GM12878 (cell line): ENCODE measurements at regions of chr11 and their contacts with region 1.

Region 1: DNA sequence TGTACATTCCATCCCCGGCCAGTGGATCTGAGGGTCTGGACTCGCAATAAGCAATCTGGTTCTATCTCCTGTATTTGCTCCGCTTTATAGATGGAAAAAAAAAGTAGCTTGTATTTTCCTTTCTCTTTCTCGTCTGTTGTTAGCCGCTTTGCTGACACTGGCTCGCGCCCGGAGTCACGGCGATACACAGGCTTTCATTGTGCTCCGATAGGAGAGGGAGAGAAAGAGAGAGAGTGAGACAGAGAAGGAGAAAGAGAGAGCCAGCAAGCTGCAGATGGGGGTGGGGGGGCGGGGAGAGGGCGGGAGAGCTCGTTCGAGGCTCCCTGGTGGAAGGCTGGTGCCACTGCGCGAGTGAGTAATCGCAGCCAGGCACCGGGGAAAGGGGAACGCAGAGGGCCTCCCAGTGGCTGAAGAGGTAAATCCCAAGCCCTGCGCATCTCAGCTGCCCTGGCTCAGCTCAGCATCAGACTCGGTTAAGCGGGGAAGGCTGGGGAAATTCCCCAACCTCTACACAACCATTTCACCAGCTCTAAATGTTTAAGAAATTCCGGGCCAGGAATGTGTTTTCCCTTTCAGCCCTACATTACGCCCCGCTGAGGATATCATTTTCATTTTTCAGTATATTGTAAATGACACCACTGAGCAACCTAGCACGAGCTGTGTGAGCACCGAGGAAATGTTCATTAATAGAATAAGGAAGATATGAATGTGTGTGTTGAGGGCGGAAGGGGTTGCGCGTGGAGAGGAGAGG is at the start of gene MAML2:
- DNase-seq: peak; percentile 91
- ATAC-seq: peak; percentile 81
- H3K4me3 ChIP-seq: peak within 1 kb of the TSS; percentile 100
- H3K27ac ChIP-seq: peak within 1 kb of the TSS; percentile 80
- H3K4me1 ChIP-seq: peaks cover 12% of the 10 kb centered on the region
- H3K27me3 ChIP-seq: no peaks in the 10 kb centered on the region
- CTCF ChIP-seq: peak; percentile 93 to 98 (median 96)
- EP300 ChIP-seq: no peak; a peak in 1 of 4 replicates
- POLR2A ChIP-seq: no peak; the same call in 1 of the 2 replicates
- RAD21 ChIP-seq: peak; percentile 90
- polyA plus RNA-seq, gene MAML2: 2.5 to 2.6 TPM

Region 2: GRCh38 chr11:95849087-95849825 is 493.9 kb before region 1 on chr11:
- CTCF ChIA-PET with region 1: interaction called, 29 read pairs
- POLR2A ChIA-PET with region 1: interaction called, 3 read pairs
- RAD21 ChIA-PET with region 1: interaction called, 25 read pairs
- SMC1A ChIA-PET with region 1: interaction called, 25 read pairs
- in situ Hi-C with region 1: no loop called
- intact Hi-C with region 1: no loop called
- DNase-seq: no peak
- ATAC-seq: peak; percentile 80
- H3K4me3 ChIP-seq: no peak overlapping the region
- H3K27ac ChIP-seq: no peak overlapping the region
- H3K4me1 ChIP-seq: no peaks in the 10 kb centered on the region
- H3K27me3 ChIP-seq: no peaks in the 10 kb centered on the region
- CTCF ChIP-seq: peak; percentile 24 to 51 (median 44); a peak in 4 of 6 replicates
- EP300 ChIP-seq: no peak
- POLR2A ChIP-seq: no peak
- RAD21 ChIP-seq: peak; percentile 60

Region 3: GRCh38 chr11:96062134-96062533 is 281.0 kb before region 1 on chr11:
- CTCF ChIA-PET with region 1: interaction called, 256 read pairs
- POLR2A ChIA-PET with region 1: no interaction called
- RAD21 ChIA-PET with region 1: interaction called, 213 read pairs
- SMC1A ChIA-PET with region 1: interaction called, 184 read pairs
- in situ Hi-C with region 1: loop called (anchors 5 kb)
- intact Hi-C with region 1: no loop called
- DNase-seq: no peak
- ATAC-seq: peak; percentile 88
- H3K4me3 ChIP-seq: no peak overlapping the region
- H3K27ac ChIP-seq: no peak overlapping the region
- H3K4me1 ChIP-seq: no peaks in the 10 kb centered on the region
- H3K27me3 ChIP-seq: no peaks in the 10 kb centered on the region
- CTCF ChIP-seq: no peak
- EP300 ChIP-seq: no peak
- POLR2A ChIP-seq: no peak
- RAD21 ChIP-seq: no peak

Region 4: GRCh38 chr11:96155627-96156378 is 187.3 kb before region 1 on chr11:
- CTCF ChIA-PET with region 1: interaction called, 10 read pairs
- POLR2A ChIA-PET with region 1: no interaction called
- RAD21 ChIA-PET with region 1: interaction called, 4 read pairs
- SMC1A ChIA-PET with region 1: interaction called, 6 read pairs
- in situ Hi-C with region 1: no loop called
- intact Hi-C with region 1: loop called (anchors 1 kb)
- DNase-seq: peak; percentile 76
- ATAC-seq: peak; percentile 89
- H3K4me3 ChIP-seq: 0 out of 2 replicates have a peak overlapping the region, but pooled peaks have one; percentile 2
- H3K27ac ChIP-seq: peak overlapping the region; percentile 87
- H3K4me1 ChIP-seq: peaks cover 37% of the 10 kb centered on the region
- H3K27me3 ChIP-seq: no peaks in the 10 kb centered on the region
- CTCF ChIP-seq: peak in 2 of 3 experiments; percentile 17 to 19; a peak in 3 of 6 replicates
- EP300 ChIP-seq: peak in 1 of 2 experiments; percentile 82; a peak in 3 of 4 replicates
- POLR2A ChIP-seq: no peak
- RAD21 ChIP-seq: peak; percentile 18

Region 5: DNA sequence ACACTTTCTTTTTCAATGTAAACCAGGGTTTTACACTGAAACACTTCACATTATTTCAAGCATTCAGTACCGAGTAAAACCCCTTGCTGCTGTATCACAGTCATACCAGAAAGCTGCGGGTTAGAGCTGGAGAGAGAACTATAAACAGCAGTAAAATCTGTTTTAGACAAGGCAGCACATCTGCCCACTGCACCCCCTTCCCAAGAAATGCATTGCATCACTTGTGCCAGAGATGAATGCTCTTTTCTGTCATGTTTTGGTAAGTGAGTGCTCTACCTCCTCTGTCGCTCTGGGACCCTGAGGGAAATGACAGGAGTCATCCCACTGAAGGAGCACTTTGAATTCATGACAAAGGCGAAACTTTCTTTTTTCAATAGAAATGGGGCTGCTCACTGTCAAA is 107.4 kb before region 1 on chr11:
- CTCF ChIA-PET with region 1: interaction called, 51 read pairs
- POLR2A ChIA-PET with region 1: interaction called, 5 read pairs
- RAD21 ChIA-PET with region 1: interaction called, 37 read pairs
- SMC1A ChIA-PET with region 1: interaction called, 189 read pairs
- in situ Hi-C with region 1: no loop called
- intact Hi-C with region 1: loop called (anchors 5 kb)
- DNase-seq: no peak
- ATAC-seq: peak; percentile 98
- H3K4me3 ChIP-seq: no peak overlapping the region
- H3K27ac ChIP-seq: peak overlapping the region; percentile 53
- H3K4me1 ChIP-seq: peaks cover 7% of the 10 kb centered on the region
- H3K27me3 ChIP-seq: no peaks in the 10 kb centered on the region
- CTCF ChIP-seq: no peak
- EP300 ChIP-seq: no peak; a peak in 1 of 4 replicates
- POLR2A ChIP-seq: no peak
- RAD21 ChIP-seq: 0 out of 2 replicates have a peak, but pooled peaks have one; percentile 9

Region 6: DNA sequence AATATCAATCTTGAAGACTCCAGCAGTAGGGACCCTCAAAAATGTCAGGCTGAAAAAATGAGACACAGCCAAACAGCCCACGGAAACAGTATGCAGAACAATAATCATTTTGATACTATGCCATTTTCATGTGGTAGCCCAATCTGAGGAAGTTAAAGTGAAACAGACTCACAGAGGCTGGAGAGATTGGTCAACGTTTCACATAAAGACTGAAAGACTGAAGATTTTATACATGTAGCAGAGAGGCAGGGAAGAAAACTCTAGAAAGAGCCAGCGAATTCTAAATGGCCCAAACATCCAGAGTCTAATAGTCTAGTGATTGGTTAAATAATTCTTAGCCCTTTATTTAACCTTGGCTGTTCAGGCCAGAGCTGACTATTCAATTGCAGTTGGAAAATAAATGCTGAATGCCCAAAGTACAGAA is 49.5 kb before region 1 on chr11:
- CTCF ChIA-PET with region 1: interaction called, 25 read pairs
- POLR2A ChIA-PET with region 1: interaction called, 6 read pairs
- RAD21 ChIA-PET with region 1: interaction called, 49 read pairs
- SMC1A ChIA-PET with region 1: interaction called, 101 read pairs
- in situ Hi-C with region 1: no loop called
- intact Hi-C with region 1: loop called (anchors 1 kb)
- DNase-seq: peak; percentile 69
- ATAC-seq: peak; percentile 91
- H3K4me3 ChIP-seq: peak overlapping the region; percentile 34; the same call in 1 of the 2 replicates
- H3K27ac ChIP-seq: peak overlapping the region; percentile 65
- H3K4me1 ChIP-seq: peaks cover 32% of the 10 kb centered on the region
- H3K27me3 ChIP-seq: no peaks in the 10 kb centered on the region
- CTCF ChIP-seq: no peak
- EP300 ChIP-seq: no peak; a peak in 1 of 4 replicates
- POLR2A ChIP-seq: no peak
- RAD21 ChIP-seq: no peak

Region 7: DNA sequence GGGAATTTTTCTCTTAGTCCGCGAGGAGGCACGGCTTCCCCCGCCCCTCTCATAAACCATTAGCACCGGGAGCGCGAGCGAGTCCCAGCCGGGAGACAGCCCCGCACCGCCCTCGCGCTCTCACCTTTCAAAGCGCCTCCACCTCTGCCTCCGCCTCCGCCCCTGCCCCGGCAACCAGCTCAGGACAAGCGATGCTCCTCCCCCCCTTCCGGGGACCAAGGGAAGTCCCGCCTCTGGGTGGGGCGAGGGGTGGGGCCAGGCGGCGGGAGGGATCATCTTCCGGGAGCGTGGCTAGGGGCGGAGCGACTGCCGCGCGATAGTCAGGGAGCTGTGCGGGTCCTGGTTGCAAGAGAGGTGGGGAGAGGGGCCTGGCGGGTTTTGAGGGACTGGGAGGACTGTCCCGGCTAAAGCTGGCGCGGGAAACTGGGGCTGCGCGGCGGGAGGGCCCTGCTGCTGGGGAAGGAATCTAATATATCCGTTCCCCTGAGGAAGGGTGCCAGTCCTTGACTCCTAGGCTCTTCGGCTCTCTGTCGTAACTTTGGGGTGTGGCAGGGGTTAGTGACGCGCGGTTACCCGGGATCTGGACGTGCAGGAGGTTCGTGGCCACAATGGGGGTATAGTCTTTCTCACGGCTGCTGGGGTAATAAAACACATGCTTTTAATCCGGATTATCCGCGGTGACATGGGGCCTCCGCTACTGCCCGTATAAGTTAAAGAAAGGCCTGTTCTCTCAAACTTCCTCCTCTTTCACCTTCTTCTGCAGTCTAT is 46.8 kb after region 1 on chr11 and contains the starts of genes CCDC82 and JRKL:
- CTCF ChIA-PET with region 1: interaction called, 56 read pairs
- POLR2A ChIA-PET with region 1: interaction called, 43 read pairs
- RAD21 ChIA-PET with region 1: interaction called, 71 read pairs
- SMC1A ChIA-PET with region 1: interaction called, 46 read pairs
- in situ Hi-C with region 1: no loop called
- intact Hi-C with region 1: loop called (anchors 2 kb)
- DNase-seq: peak; percentile 78
- ATAC-seq: peak; percentile 94
- H3K4me3 ChIP-seq: peak within 1 kb of the TSS; percentile 90
- H3K27ac ChIP-seq: peak within 1 kb of the TSS; percentile 78
- H3K4me1 ChIP-seq: no peaks in the 10 kb centered on the region
- H3K27me3 ChIP-seq: no peaks in the 10 kb centered on the region
- CTCF ChIP-seq: no peak
- EP300 ChIP-seq: no peak
- POLR2A ChIP-seq: peak; percentile 92
- RAD21 ChIP-seq: no peak
- polyA plus RNA-seq, gene CCDC82: 24.5 to 24.7 TPM
- polyA plus RNA-seq, gene JRKL: 4.6 to 4.8 TPM

Region 8: GRCh38 chr11:96893988-96894387 is 550.9 kb after region 1 on chr11:
- CTCF ChIA-PET with region 1: no interaction called
- POLR2A ChIA-PET with region 1: no interaction called
- RAD21 ChIA-PET with region 1: no interaction called
- SMC1A ChIA-PET with region 1: no interaction called
- in situ Hi-C with region 1: no loop called
- intact Hi-C with region 1: no loop called
- DNase-seq: no peak
- ATAC-seq: no peak
- H3K4me3 ChIP-seq: no peak overlapping the region
- H3K27ac ChIP-seq: no peak overlapping the region
- H3K4me1 ChIP-seq: no peaks in the 10 kb centered on the region
- H3K27me3 ChIP-seq: no peaks in the 10 kb centered on the region
- CTCF ChIP-seq: no peak
- EP300 ChIP-seq: no peak
- POLR2A ChIP-seq: no peak
- RAD21 ChIP-seq: no peak